ENCODE measurements at regions of chr10 and their contacts with region 1.

Region 1: DNA sequence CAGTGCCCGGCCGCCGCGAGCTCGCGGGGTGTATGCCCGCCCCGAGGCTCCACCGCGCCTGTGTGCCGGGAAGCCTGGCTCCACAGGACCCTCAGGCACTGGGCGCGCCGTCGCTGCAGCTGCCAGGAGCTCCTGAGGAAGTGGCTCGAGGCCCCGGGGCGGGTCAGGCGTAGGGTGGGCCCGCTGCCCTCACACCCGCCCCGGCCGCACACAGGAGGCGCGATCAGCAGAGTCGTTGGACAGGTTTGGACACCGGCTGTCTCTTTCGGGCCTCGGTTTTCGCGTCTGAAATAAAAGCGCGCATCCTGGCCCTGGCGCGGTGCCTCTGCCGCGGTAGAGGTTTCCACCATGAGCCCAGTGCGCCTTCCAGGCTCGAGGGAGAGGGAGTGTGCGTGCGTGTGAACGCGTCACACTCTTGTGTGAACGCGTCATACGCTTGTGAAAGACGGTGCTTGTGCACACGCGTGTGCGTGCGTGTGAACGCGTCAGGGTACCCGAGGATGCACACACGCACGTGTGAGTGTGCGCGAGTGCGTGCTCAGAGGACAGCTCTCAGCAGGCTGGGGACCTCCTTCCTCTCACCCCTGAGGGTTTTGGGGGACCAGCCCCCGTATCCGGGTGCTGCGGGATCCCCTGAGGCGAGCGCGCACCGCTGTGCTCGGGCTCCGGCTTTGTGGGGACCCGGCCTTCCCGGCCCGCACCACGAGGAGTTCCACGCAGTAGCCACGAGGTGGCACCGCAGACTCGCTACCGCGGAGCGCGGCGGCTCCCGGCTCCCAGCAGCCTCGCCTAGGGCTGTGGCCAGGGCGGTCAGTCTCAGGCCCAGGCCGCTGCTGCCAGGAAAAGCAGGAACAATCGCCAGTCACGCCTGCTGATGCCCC is 83.8 kb downstream of the BMS1 start:
- DNase-seq: peak; percentile 59 to 90
- H3K4me3 ChIP-seq: peak overlapping the region; percentile 8 to 48 (median 16); a peak in 5 of 8 replicates
- H3K27ac ChIP-seq: no peak overlapping the region
- H3K4me1 ChIP-seq: peaks cover 0 to 2% (median under 1%) of the 10 kb centered on the region in 4 experiments; a peak in 2 of 7 replicates
- H3K27me3 ChIP-seq: peaks cover 0 to 17% (median 12%) of the 10 kb centered on the region in 4 experiments; a peak in 4 of 7 replicates
- CTCF ChIP-seq: peak; percentile 75 to 91 (median 78)
- EP300 ChIP-seq: no peak
- POLR2A ChIP-seq: no peak
- RAD21 ChIP-seq: peak; percentile 92 to 94

Region 2: DNA sequence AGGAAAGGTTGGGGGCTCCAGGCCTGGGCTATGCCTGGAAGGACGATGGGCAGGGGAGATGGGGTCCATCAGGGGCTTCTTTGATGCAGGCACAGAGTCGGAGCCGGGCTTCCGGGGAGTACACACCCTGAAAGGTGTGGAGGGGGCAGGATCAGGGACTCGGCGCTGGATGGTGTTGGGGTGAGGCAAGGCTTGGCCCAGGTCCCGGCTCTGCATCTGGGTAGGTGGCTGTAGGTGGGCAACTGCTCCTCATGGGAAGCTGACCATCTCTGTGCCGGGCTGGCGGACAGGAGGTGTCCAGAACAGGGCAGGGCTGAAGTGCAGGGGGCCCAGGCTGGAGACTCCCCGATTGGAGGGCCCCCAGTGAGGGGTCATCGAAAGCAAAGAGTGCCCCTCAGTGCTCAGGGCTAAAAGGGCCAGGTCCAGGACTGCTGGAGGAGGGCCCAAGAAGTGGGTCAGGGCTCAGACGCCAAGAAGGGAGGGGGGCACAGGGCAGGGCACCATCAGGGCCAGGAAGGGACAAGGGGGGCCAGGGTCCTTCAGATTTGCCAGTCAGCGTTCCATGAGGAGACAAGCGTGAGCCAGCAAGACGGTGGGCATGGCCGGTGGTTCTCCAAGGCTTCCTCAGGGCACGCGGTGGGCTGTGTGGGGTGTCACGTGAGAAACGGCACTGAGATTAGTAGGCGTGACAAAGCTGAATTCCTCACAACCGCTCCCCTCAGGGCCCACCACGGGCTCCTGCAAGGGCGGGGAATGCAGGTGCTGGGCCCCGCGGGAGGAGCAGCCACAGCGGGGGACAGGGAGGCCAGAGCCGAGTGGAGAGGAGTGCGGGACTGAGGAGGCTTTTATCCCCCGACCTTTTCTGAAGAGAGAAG is 13.3 kb after region 1 on chr10:
- CTCF ChIA-PET with region 1: no interaction called
- POLR2A ChIA-PET with region 1: no interaction called
- DNase-seq: no peak
- H3K4me3 ChIP-seq: no peak overlapping the region
- H3K27ac ChIP-seq: no peak overlapping the region
- H3K4me1 ChIP-seq: no peaks in the 10 kb centered on the region; a peak in 2 of 7 replicates
- H3K27me3 ChIP-seq: no peaks in the 10 kb centered on the region
- CTCF ChIP-seq: no peak
- EP300 ChIP-seq: no peak
- POLR2A ChIP-seq: no peak
- RAD21 ChIP-seq: no peak

Region 3: GRCh38 chr10:43039624-43040481 is 173.5 kb after region 1 on chr10:
- CTCF ChIA-PET with region 1: interaction called, 26 read pairs
- POLR2A ChIA-PET with region 1: no interaction called
- DNase-seq: peak in 1 of 2 experiments; percentile 39
- H3K4me3 ChIP-seq: no peak overlapping the region
- H3K27ac ChIP-seq: no peak overlapping the region
- H3K4me1 ChIP-seq: peaks cover 0 to 22% (median 9%) of the 10 kb centered on the region in 4 experiments; a peak in 6 of 7 replicates
- H3K27me3 ChIP-seq: no peaks in the 10 kb centered on the region
- CTCF ChIP-seq: no peak
- EP300 ChIP-seq: no peak
- POLR2A ChIP-seq: no peak
- RAD21 ChIP-seq: no peak

Region 4: DNA sequence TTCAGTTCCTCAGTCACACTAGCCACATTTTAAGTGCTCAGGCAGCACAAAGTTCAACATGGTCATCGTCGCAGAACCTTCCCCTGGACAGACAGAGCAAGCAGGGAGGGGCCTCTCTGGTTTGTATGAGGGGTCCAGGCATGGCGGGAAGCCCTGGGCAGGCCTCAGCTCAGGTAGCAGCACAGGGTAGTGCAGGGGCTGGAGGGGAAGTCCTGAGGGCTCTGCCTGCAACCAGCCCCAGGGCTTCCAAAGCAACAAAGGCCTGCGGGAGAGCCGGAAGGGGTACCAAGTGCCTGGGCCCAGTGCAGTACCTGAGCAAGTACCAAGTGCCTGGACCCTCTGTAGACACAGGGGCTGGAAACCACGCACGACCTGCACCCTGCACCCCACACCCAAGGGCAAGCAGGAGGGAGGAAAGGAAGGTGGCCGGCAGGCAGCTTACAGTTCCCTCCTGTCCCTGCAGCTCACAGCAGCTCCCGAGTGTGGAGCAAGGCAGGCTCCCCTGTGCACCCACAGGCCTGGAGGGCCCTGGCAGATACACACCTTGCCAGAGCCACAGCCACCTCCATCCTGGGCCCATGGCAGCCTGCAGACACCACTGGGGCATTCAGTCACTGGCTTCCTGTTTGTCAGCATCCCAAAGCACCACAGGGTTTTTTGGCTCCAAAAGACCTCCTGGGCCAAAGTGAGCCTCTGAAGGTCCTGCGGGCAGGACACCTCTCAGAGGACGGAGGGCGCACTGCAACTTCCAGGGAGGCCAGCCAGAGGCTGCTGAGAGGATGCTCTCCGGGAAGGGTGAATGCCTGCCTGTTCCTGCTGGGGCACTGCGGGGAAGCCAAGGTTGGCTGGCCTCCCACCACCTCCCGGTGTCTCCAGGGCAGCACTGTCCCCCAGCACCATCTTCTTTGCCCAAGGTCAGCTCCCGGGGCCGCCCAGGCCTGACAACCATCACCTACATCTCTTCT is 204.0 kb after region 1 on chr10:
- CTCF ChIA-PET with region 1: interaction called, 97 read pairs
- POLR2A ChIA-PET with region 1: no interaction called
- DNase-seq: no peak
- H3K4me3 ChIP-seq: no peak overlapping the region
- H3K27ac ChIP-seq: no peak overlapping the region
- H3K4me1 ChIP-seq: no peaks in the 10 kb centered on the region; a peak in 1 of 7 replicates
- H3K27me3 ChIP-seq: peaks cover 0 to 6% (median 3%) of the 10 kb centered on the region in 4 experiments; a peak in 6 of 7 replicates
- CTCF ChIP-seq: peak in 2 of 3 experiments; percentile 7 to 32; a peak in 2 of 4 replicates
- EP300 ChIP-seq: no peak
- POLR2A ChIP-seq: no peak
- RAD21 ChIP-seq: peak; percentile 22 to 36; a peak in 2 of 4 replicates

Region 5: DNA sequence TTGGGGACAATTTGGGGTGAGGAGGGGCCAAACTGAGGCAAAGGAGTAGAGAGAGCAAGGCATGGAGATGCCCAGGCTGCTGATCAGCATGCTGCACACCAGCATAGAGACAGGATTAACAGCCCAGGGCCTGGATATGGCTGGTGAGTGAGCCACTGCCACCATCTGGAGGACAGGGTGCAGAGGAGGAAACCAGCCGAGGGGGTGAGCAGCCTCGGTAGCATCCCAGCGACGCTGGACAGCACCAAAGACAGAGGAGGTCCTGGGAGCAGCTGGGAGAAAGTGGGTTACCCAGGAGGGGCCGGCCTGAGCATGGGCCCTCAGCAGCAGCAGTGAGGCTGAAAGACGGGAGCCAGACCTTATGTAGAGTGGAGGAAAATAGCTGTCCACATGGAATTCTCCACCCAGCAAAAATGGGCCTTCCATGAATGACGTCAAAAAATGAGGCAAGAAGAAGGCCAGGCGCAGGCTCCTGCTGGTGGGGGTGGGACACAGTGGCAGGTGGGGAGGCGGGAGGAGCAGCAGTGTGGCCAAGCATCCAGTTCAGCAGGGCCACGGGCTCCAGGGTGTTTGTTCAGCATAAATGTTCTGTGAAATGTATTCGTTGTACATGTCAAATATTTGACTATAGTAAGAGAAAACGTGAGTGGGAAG is 227.2 kb after region 1 on chr10:
- CTCF ChIA-PET with region 1: interaction called, 32 read pairs
- POLR2A ChIA-PET with region 1: no interaction called
- DNase-seq: no peak
- H3K4me3 ChIP-seq: no peak overlapping the region
- H3K27ac ChIP-seq: no peak overlapping the region
- H3K4me1 ChIP-seq: peaks cover 0 to 6% (median 3%) of the 10 kb centered on the region in 4 experiments; a peak in 2 of 7 replicates
- H3K27me3 ChIP-seq: no peaks in the 10 kb centered on the region; a peak in 1 of 7 replicates
- CTCF ChIP-seq: peak; percentile 21 to 48 (median 43); a peak in 2 of 4 replicates
- EP300 ChIP-seq: no peak
- POLR2A ChIP-seq: no peak
- RAD21 ChIP-seq: peak; percentile 47 to 61; a peak in 3 of 4 replicates

Region 6: GRCh38 chr10:43105102-43105785 is 238.9 kb after region 1 on chr10:
- CTCF ChIA-PET with region 1: interaction called, 21 read pairs
- POLR2A ChIA-PET with region 1: no interaction called
- DNase-seq: peak; percentile 75 to 94
- H3K4me3 ChIP-seq: peak overlapping the region; percentile 17 to 64 (median 58)
- H3K27ac ChIP-seq: no peak overlapping the region
- H3K4me1 ChIP-seq: peaks cover 0 to 13% (median 3%) of the 10 kb centered on the region in 4 experiments; a peak in 5 of 7 replicates
- H3K27me3 ChIP-seq: peaks cover 0 to 16% (median 12%) of the 10 kb centered on the region in 4 experiments; a peak in 6 of 7 replicates
- CTCF ChIP-seq: peak in 2 of 3 experiments; percentile 92 to 93; a peak in 3 of 4 replicates
- EP300 ChIP-seq: 0 out of 3 replicates have a peak, but pooled peaks of 1 of the 2 experiments have one; percentile 6
- POLR2A ChIP-seq: 0 out of 3 replicates have a peak, but pooled peaks of 1 of the 2 experiments have one; percentile 34
- RAD21 ChIP-seq: peak; percentile 96 to 98